Activated CD4-positive, alpha-beta T cell treated with anti-CD3 and anti-CD28 coated beads for 36 hours (primary cell): ENCODE measurements at regions of chr14 and their contacts with region 1.

Region 1: DNA sequence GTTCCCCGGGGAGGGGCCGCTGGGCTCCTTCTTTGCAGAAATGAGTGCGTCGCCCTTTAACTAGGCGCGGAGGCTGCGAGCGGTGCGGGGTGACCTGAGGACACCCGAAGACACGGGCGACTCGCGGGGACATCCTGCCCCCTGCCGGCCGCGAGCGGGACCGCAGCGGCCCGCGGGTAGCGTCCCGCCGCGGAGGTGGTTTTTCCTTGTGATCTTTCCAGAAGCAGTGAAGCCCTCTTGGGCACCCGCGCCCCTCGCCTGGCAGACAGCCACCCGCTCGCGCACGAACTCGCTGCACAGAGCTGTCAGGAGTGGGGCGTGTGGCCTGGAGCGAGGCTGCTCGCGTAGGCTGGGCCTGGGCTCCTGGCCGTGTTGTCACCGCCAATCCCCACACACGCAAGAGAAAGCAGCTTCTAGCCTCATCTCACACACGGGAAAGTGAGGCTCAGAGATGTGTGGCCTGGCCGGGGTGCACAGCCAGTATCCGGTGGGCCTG is 67.2 kb downstream of the DIO3 start:
- DNase-seq: peak; percentile 87
- ATAC-seq: peak; percentile 94
- H3K4me3 Mint-ChIP-seq: no peak overlapping the region
- H3K27ac Mint-ChIP-seq: no peak overlapping the region
- H3K4me1 Mint-ChIP-seq: no peaks in the 10 kb centered on the region
- H3K27me3 Mint-ChIP-seq: peaks cover 2% of the 10 kb centered on the region

Region 2: GRCh38 chr14:100850841-100851585 is 777.5 kb before region 1 on chr14:
- CTCF ChIA-PET with region 1: interaction called, 4 read pairs
- POLR2A ChIA-PET with region 1: no interaction called
- intact Hi-C with region 1: loop called (anchors 1 to 2 kb)
- DNase-seq: peak; percentile 91
- ATAC-seq: peak; percentile 92
- H3K4me3 Mint-ChIP-seq: no peak overlapping the region
- H3K27ac Mint-ChIP-seq: no peak overlapping the region
- H3K4me1 Mint-ChIP-seq: no peaks in the 10 kb centered on the region
- H3K27me3 Mint-ChIP-seq: no peaks in the 10 kb centered on the region

Region 3: DNA sequence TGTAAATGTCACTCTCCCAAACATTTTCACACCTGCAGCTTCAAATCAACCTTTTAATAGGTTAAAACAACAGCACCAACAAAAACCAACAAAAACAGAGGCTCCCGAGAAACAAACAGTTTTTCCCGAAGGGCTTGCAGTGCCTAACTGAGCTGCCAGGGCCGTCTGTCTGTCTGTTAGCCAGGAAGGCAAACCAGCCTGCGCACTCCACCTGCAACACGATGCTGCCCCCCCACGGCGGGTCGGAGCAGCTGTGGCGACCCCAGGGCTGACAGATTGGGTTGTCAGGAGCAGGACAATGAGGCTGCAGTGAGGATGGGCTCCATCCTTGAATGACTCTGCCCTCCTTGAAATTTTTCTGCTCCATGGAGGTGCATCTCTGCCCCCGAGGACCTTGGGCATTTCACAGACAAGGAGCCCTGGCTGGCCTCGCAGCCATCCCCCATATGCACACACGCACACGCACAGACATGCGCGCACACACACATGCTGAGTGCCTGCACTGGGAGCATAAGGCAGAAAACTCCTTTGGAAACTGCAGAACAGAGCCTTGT is 727.6 kb before region 1 on chr14:
- CTCF ChIA-PET with region 1: no interaction called
- POLR2A ChIA-PET with region 1: no interaction called
- intact Hi-C with region 1: loop called (anchors 2 to 5 kb)
- DNase-seq: peak; percentile 54
- ATAC-seq: no peak
- H3K4me3 Mint-ChIP-seq: no peak overlapping the region
- H3K27ac Mint-ChIP-seq: no peak overlapping the region
- H3K4me1 Mint-ChIP-seq: no peaks in the 10 kb centered on the region
- H3K27me3 Mint-ChIP-seq: peaks cover 48% of the 10 kb centered on the region

Region 4: DNA sequence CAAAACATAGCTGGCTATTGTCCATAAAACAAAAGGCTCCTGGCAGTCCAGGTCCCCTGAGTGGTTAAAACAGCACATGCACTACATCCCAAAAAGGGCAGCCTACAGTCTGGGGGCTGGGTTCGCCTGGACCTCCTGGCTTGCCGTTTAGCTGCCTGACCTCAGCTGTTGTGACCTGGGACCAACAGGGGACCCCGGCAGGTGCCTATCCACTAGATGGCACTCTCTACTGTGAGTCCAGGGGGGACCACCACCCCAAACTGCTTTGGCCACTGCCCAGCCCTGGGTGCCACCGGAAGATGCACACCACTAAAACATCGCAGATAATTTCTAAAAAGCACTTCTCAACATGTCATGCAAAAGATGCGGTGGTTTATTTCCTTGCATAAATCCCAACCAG is 722.1 kb before region 1 on chr14:
- CTCF ChIA-PET with region 1: no interaction called
- POLR2A ChIA-PET with region 1: no interaction called
- intact Hi-C with region 1: loop called (anchors 2 to 5 kb)
- DNase-seq: no peak
- ATAC-seq: no peak
- H3K4me3 Mint-ChIP-seq: no peak overlapping the region
- H3K27ac Mint-ChIP-seq: no peak overlapping the region
- H3K4me1 Mint-ChIP-seq: no peaks in the 10 kb centered on the region
- H3K27me3 Mint-ChIP-seq: peaks cover 24% of the 10 kb centered on the region

Region 5: GRCh38 chr14:101215266-101215665 is 413.3 kb before region 1 on chr14:
- CTCF ChIA-PET with region 1: no interaction called
- POLR2A ChIA-PET with region 1: no interaction called
- intact Hi-C with region 1: no loop called
- DNase-seq: no peak
- ATAC-seq: no peak
- H3K4me3 Mint-ChIP-seq: no peak overlapping the region
- H3K27ac Mint-ChIP-seq: no peak overlapping the region
- H3K4me1 Mint-ChIP-seq: no peaks in the 10 kb centered on the region
- H3K27me3 Mint-ChIP-seq: peaks cover 2% of the 10 kb centered on the region

Region 6: DNA sequence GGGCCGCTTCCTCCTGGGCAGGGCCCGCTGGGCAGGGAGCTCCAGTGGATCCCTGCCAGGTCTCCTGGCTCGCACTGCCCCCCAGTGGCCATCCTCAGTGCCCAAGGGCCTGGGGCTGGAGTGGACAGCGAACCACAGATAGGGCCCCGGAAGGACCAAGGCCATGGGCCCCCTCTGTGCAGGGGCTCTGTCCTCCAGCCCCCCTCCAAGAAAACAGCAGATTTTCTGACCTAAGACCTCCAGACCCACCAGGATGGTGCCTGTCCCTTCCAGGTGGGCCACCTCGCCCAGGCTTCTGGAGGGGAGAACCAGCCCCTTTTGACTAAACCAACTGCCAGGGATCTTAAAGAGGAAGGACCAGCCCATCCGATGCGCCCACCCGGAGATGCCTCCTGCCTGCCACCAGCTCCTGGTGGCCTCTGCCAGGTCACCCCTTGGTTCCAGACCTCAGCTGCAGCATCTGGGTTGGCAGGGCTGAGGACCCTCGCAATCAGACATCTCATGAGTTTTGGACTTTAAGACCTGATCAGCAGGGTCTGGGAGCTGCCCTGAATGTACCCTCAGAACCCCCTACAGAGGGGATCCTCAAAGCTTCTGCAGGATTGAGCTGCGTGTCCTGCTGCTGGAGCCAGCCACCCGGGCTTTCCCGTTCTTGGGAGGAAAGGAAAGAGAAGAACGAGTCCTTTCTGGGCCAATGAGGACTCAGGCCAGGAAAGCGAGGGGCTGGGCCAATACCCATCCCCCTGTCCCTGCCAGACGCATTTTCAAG is 393.0 kb before region 1 on chr14:
- CTCF ChIA-PET with region 1: interaction called, 3 read pairs
- POLR2A ChIA-PET with region 1: no interaction called
- intact Hi-C with region 1: loop called in 1 of 2 experiments (anchors 2 kb)
- DNase-seq: peak; percentile 70
- ATAC-seq: no peak
- H3K4me3 Mint-ChIP-seq: no peak overlapping the region
- H3K27ac Mint-ChIP-seq: no peak overlapping the region
- H3K4me1 Mint-ChIP-seq: no peaks in the 10 kb centered on the region
- H3K27me3 Mint-ChIP-seq: peaks cover 7% of the 10 kb centered on the region

Region 7: DNA sequence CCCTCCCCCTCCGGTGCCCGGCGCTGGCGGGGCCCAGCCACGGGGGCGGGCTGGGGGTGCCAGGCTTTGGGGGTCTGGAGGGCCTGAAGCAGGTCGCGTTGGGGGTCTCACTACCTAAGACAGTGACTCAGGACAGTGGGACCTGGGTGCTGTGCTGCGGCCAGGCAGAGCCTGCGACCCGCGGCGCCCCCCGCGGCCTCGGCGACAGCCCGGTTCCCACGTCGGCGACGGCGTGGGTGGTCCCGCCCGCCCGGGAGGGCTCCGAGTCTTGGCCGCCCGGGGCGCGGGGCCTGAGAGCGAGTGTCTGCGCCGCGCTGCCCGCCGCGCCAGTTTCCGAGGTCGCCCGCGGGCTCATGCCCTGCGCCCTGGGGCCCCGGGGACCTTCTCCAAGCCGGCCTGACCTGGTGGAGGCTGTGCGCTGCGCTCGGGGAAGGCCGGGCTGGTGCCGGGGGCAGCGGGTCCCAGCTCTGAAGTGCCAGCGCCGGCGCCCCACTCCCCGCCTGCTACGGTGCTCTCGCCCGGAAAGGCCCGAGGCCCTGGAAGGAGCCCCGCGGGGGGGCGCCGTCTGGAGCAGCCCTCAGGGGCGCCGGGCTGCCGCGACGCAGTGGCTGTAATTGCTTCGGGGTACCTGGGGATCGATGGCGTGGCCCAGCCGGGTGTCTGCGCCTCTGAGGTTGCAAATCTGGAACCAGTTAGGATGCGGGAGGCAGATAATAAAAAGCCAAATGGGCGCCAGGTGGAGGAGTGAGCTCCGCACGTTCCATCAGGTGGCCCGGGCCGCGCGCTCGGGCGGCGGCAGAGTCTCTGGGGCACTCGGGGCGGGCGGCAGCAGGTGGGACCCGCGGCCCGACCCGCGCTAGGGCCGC is 169.8 kb before region 1 on chr14:
- CTCF ChIA-PET with region 1: no interaction called
- POLR2A ChIA-PET with region 1: no interaction called
- intact Hi-C with region 1: loop called in 1 of 2 experiments (anchors 10 kb)
- DNase-seq: no peak
- ATAC-seq: no peak
- H3K4me3 Mint-ChIP-seq: no peak overlapping the region
- H3K27ac Mint-ChIP-seq: no peak overlapping the region
- H3K4me1 Mint-ChIP-seq: peaks cover 4% of the 10 kb centered on the region
- H3K27me3 Mint-ChIP-seq: peaks cover 45% of the 10 kb centered on the region

Region 8: GRCh38 chr14:101673873-101674272 is 45.4 kb after region 1 on chr14:
- CTCF ChIA-PET with region 1: no interaction called
- POLR2A ChIA-PET with region 1: no interaction called
- intact Hi-C with region 1: no loop called
- DNase-seq: no peak
- ATAC-seq: no peak
- H3K4me3 Mint-ChIP-seq: no peak overlapping the region
- H3K27ac Mint-ChIP-seq: no peak overlapping the region
- H3K4me1 Mint-ChIP-seq: no peaks in the 10 kb centered on the region
- H3K27me3 Mint-ChIP-seq: peaks cover 8% of the 10 kb centered on the region